ENCODE measurements at regions of chr9 and their contacts with region 1.

Region 1: DNA sequence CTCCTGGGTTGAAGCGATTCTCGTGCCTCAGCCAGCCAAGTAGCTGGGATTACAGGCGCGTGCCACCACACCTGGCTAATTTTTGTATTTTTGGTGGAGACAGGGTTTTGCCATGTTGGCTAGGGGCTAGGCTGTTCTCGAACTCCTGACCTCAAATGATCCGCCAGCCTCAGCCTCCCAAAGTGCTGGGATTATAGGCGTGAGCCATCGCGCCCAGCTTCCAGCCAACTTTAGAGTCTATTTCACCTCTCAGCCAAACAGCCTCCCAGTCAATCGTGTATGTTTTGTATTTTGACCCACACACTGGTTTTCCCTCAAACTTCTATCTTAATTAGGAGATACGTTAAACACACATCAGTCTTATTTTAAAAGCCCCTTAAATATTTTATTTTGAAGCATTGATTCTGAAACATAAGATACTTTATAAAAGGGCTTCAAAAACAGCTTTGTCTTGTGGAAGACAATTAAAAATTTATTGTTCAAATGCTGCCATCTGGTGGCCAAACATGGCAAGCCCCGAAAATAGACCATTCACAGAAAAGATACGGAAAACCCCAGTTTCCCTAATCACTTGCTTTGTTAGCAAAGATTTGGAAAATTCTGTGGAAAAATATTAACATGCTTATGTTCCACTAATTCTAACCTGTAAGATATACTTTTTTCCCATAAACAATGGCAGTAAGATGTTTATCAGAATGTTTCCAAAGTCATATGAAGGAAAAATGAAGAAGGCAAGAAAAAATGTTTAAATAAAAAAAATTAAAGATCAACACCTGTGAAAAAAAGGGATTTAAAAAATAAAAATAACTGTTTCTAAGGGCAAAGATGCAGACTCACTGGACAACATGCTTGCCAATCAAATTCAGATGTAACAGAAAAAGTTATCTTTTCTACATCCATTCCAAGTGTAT is 33.1 kb downstream of the APTX start:
- DNase-seq: peak; percentile 30 to 33
- ATAC-seq: peak in 1 of 2 experiments; percentile 63; a peak in 3 of 6 replicates
- H3K4me3 ChIP-seq: no peak overlapping the region
- H3K27ac ChIP-seq: no peak overlapping the region
- H3K4me1 ChIP-seq: no peaks in the 10 kb centered on the region
- CTCF ChIP-seq: peak; percentile 90
- EP300 ChIP-seq: no peak
- POLR2A ChIP-seq: no peak
- RAD21 ChIP-seq: peak; percentile 82 to 85

Region 2: GRCh38 chr9:32954642-32955041 is 13.7 kb before region 1 on chr9:
- CTCF ChIA-PET with region 1: interaction called, 20 read pairs
- POLR2A ChIA-PET with region 1: no interaction called
- DNase-seq: peak in 1 of 2 experiments; percentile 4
- ATAC-seq: no peak
- H3K4me3 ChIP-seq: no peak overlapping the region
- H3K27ac ChIP-seq: no peak overlapping the region
- H3K4me1 ChIP-seq: no peaks in the 10 kb centered on the region
- CTCF ChIP-seq: no peak
- EP300 ChIP-seq: no peak
- POLR2A ChIP-seq: no peak
- RAD21 ChIP-seq: no peak

Region 3: DNA sequence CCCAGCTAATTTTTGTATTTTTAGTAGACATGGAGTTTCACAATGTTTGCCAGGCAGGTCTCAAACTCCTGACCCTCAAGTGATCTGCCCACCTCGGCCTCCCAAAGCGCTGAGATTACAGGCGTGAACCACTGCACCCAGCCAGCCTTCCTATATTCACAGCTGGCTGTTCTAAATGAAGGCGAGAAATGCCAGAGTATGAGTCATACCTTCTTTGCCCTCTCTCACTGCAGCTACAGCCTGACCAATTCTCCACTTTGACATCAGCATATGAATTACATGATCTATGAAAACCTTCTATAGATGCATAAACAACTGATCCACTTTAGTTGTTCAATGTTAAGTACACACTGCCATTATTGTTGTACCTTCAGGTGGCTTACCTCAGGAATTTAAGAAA is 18.6 kb after region 1 on chr9:
- CTCF ChIA-PET with region 1: interaction called, 12 read pairs
- POLR2A ChIA-PET with region 1: no interaction called
- DNase-seq: no peak
- ATAC-seq: no peak
- H3K4me3 ChIP-seq: no peak overlapping the region
- H3K27ac ChIP-seq: no peak overlapping the region
- H3K4me1 ChIP-seq: no peaks in the 10 kb centered on the region
- CTCF ChIP-seq: no peak
- EP300 ChIP-seq: no peak
- POLR2A ChIP-seq: no peak
- RAD21 ChIP-seq: no peak

Region 4: DNA sequence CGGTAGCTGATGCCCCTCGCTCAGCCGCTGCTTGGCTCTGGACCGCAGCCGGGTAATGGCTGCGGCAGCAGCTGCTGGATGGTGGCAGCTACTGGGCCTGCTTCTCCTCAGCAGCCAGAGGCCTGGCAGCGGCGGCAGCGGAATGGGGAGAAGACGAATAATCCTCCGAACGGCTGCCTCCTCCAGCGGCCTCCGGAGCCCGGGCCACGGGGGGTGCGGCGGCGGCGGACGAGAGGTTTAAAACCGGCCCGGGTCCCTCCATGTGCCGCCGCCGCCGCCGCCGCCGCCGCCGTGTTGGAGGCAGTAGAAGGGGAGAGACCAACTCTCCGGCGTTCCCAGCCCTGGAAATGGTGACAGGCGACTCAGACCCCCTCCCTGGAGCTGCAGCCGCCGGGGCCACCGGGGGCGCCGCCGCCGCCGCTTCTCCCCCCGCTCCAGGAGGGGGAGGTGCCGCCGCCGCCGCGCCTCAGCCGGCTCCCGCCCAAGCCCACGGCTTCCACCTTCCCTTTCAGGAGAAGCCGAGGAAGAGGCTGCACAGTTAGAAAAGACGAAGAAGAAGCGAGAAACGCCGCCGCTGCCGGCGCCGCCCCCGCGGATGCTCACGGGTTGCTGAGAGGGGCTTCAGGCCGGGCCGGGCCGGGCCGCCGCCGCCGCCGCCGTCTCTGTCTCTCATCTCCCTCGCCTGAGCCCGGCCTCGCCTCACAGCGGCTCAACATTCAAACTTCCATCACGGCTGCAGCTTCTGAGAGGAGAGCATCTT is 708.6 kb after region 1 on chr9:
- CTCF ChIA-PET with region 1: no interaction called
- POLR2A ChIA-PET with region 1: no interaction called
- DNase-seq: peak; percentile 29 to 60
- ATAC-seq: peak; percentile 94 to 95
- H3K4me3 ChIP-seq: peak overlapping the region; percentile 62
- H3K27ac ChIP-seq: peak overlapping the region; percentile 94 to 99
- H3K4me1 ChIP-seq: peaks cover 8% of the 10 kb centered on the region; the same call in 2 of the 3 replicates
- CTCF ChIP-seq: no peak
- EP300 ChIP-seq: no peak
- POLR2A ChIP-seq: peak; percentile 45
- RAD21 ChIP-seq: no peak